Right cardiac atrium (tissue), 5 donors: ENCODE measurements at regions of chr6 and their contacts with region 1.

Region 1: GRCh38 chr6:44010411-44011349 is 116.6 kb downstream of the MRPL14 start:
- DNase-seq: peak in 2 of 3 donors; percentile 53 to 72
- ATAC-seq: peak; percentile 69 to 83
- H3K4me3 ChIP-seq: no peak overlapping the region
- H3K27ac ChIP-seq: peak overlapping the region; percentile 97
- H3K4me1 ChIP-seq: no peaks in the 10 kb centered on the region
- H3K27me3 ChIP-seq: no peaks in the 10 kb centered on the region

Region 2: DNA sequence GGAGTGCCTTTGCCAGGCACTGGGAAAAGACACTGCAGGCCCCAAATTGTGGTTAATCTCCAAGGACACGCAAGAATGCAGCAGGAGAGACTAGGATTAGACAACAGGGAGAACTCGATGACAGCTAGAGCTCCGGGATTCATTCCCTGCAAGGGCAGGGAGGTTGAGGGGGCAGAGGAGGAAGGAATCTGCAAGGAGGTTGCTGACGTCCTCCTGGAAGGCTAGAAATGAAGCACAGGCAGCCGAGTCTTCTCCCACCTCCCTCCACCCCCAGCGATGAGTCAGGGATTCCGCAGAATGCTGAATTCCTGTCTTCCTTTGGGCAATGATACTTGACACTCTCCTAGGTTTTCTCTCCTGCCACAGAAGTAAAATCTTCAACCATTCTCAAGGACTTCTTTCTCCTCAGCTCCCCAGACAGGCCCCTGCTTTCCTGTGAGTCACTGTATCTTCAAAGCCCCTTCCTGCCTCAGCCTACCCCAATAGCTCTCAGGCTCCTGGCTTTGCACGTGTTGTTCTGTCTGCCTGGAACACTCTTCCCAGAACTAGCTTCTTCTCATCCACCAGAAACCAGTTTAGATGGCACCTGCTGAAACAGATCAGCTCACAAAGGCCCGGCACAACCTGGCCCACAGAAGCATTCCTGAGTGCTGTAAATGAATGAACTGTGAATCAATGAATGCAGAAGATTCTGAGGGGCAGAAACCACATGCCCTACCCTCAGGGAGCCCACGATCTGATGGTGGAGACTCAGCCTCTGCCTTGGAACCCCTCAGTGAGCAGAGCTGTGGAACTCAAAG is 31.0 kb after region 1 on chr6:
- intact Hi-C with region 1: loop called in 1 of 4 experiments (anchors 2 kb)
- DNase-seq: no peak
- ATAC-seq: no peak
- H3K4me3 ChIP-seq: no peak overlapping the region
- H3K27ac ChIP-seq: no peak overlapping the region
- H3K4me1 ChIP-seq: peaks cover 10% of the 10 kb centered on the region
- H3K27me3 ChIP-seq: no peaks in the 10 kb centered on the region